B cell (primary cell): ENCODE measurements at regions of chr4 and their contacts with region 1.

Region 1: GRCh38 chr4:48033825-48034413 is 17.3 kb downstream of the NIPAL1 start:
- DNase-seq: peak; percentile 83
- ATAC-seq: peak; percentile 69
- H3K4me3 ChIP-seq: no peak overlapping the region
- H3K4me3 Mint-ChIP-seq: no peak overlapping the region
- H3K27ac ChIP-seq: no peak overlapping the region
- H3K27ac Mint-ChIP-seq: no peak overlapping the region
- H3K4me1 ChIP-seq: peaks cover 35 to 37% of the 10 kb centered on the region in 2 donors
- H3K4me1 Mint-ChIP-seq: peaks cover 40% of the 10 kb centered on the region
- H3K27me3 ChIP-seq: no peaks in the 10 kb centered on the region
- H3K27me3 Mint-ChIP-seq: peaks cover 4% of the 10 kb centered on the region
- CTCF ChIP-seq: peak; percentile 77

Region 2: DNA sequence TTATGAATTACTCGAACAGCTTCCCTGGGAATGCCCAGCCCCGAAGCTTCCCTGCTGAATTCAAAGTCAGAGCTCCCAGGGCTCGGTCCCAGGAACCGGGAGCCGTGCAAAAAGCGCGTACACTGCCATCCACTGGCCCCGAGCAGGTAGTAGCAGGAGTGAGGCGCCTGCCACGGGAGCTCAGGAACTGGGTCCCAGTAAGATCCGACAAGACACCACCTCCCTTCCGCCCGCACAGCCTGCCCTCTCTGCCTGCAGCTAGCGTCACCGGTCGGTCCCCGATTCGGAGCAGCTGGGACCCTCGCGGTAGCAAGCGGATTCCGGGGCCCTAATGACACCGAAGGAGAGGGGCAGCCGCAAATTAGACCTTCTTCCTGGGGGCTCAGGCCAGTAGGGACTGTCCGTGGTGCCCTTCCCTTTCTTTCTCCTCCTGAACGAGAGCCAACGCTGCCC is 197.3 kb before region 1 on chr4:
- CTCF ChIA-PET with region 1: no interaction called
- POLR2A ChIA-PET with region 1: no interaction called
- intact Hi-C with region 1: no loop called
- DNase-seq: peak; percentile 49
- ATAC-seq: peak; percentile 44
- H3K4me3 ChIP-seq: peak overlapping the region; percentile 44 to 73 (median 56)
- H3K4me3 Mint-ChIP-seq: peak overlapping the region; percentile 90
- H3K27ac ChIP-seq: no peak overlapping the region
- H3K27ac Mint-ChIP-seq: no peak overlapping the region
- H3K4me1 ChIP-seq: peaks cover 26 to 28% of the 10 kb centered on the region in 2 donors
- H3K4me1 Mint-ChIP-seq: peaks cover 32% of the 10 kb centered on the region
- H3K27me3 ChIP-seq: peaks cover 0 to 32% (median 21%) of the 10 kb centered on the region in 4 experiments
- H3K27me3 Mint-ChIP-seq: peaks cover 37% of the 10 kb centered on the region
- CTCF ChIP-seq: peak; percentile 31

Region 3: GRCh38 chr4:48002267-48002666 is 31.7 kb before region 1 on chr4:
- CTCF ChIA-PET with region 1: interaction called, 10 read pairs
- POLR2A ChIA-PET with region 1: no interaction called
- intact Hi-C with region 1: no loop called
- DNase-seq: no peak
- ATAC-seq: no peak
- H3K4me3 ChIP-seq: no peak overlapping the region
- H3K4me3 Mint-ChIP-seq: no peak overlapping the region
- H3K27ac ChIP-seq: no peak overlapping the region
- H3K27ac Mint-ChIP-seq: no peak overlapping the region
- H3K4me1 ChIP-seq: no peaks in the 10 kb centered on the region
- H3K4me1 Mint-ChIP-seq: no peaks in the 10 kb centered on the region
- H3K27me3 ChIP-seq: peaks cover 0 to 5% (median 1%) of the 10 kb centered on the region in 4 experiments
- H3K27me3 Mint-ChIP-seq: peaks cover 9% of the 10 kb centered on the region
- CTCF ChIP-seq: no peak

Region 4: GRCh38 chr4:48016141-48017103 is 17.5 kb before region 1 on chr4 and contains the starts of genes CNGA1 and NIPAL1:
- CTCF ChIA-PET with region 1: interaction called, 19 read pairs
- POLR2A ChIA-PET with region 1: no interaction called
- intact Hi-C with region 1: loop called (anchors 2 kb)
- DNase-seq: peak; percentile 71
- ATAC-seq: peak; percentile 92
- H3K4me3 ChIP-seq: peak within 1 kb of the TSS; percentile 41 to 80 (median 66)
- H3K4me3 Mint-ChIP-seq: peak within 1 kb of the TSS; percentile 89
- H3K27ac ChIP-seq: no peak within 1 kb of the TSS
- H3K27ac Mint-ChIP-seq: peak within 1 kb of the TSS; percentile 50
- H3K4me1 ChIP-seq: peaks cover 15 to 18% of the 10 kb centered on the region in 2 donors
- H3K4me1 Mint-ChIP-seq: peaks cover 15% of the 10 kb centered on the region
- H3K27me3 ChIP-seq: peaks cover 2 to 49% (median 28%) of the 10 kb centered on the region in 4 experiments
- H3K27me3 Mint-ChIP-seq: peaks cover 45% of the 10 kb centered on the region
- CTCF ChIP-seq: peak; percentile 15
- total RNA-seq, gene CNGA1: not detected in 2 replicates
- total RNA-seq, gene NIPAL1: 1.1 TPM in 1 of 2 replicates, not detected in the other